ENCODE measurements at regions of chrX and their contacts with region 1.

Region 1: GRCh38 chrX:22135994-22136684 is 104.0 kb downstream of the PHEX start:
- DNase-seq: peak; percentile 36 to 73
- ATAC-seq: peak; percentile 69 to 75; a peak in 4 of 6 replicates
- H3K4me3 ChIP-seq: no peak overlapping the region
- H3K27ac ChIP-seq: peak overlapping the region; percentile 68 to 84
- H3K4me1 ChIP-seq: peaks cover 31% of the 10 kb centered on the region
- CTCF ChIP-seq: peak; percentile 77
- EP300 ChIP-seq: no peak
- POLR2A ChIP-seq: no peak
- RAD21 ChIP-seq: peak; percentile 68 to 76

Region 2: GRCh38 chrX:21985332-21985777 is 150.8 kb before region 1 on chrX:
- CTCF ChIA-PET with region 1: interaction called, 25 read pairs
- POLR2A ChIA-PET with region 1: interaction called, 3 read pairs
- DNase-seq: peak; percentile 76 to 77
- ATAC-seq: peak; percentile 93 to 95
- H3K4me3 ChIP-seq: no peak overlapping the region
- H3K27ac ChIP-seq: no peak overlapping the region
- H3K4me1 ChIP-seq: peaks cover 13% of the 10 kb centered on the region
- CTCF ChIP-seq: peak; percentile 88
- EP300 ChIP-seq: no peak
- POLR2A ChIP-seq: no peak
- RAD21 ChIP-seq: peak; percentile 82 to 83

Region 3: GRCh38 chrX:22081475-22082092 is 54.6 kb before region 1 on chrX:
- CTCF ChIA-PET with region 1: interaction called, 14 read pairs
- POLR2A ChIA-PET with region 1: no interaction called
- DNase-seq: peak in 1 of 2 experiments; percentile 63
- ATAC-seq: peak; percentile 64 to 93; a peak in 5 of 6 replicates
- H3K4me3 ChIP-seq: no peak overlapping the region
- H3K27ac ChIP-seq: no peak overlapping the region
- H3K4me1 ChIP-seq: no peaks in the 10 kb centered on the region
- CTCF ChIP-seq: peak; percentile 58
- EP300 ChIP-seq: no peak
- POLR2A ChIP-seq: no peak
- RAD21 ChIP-seq: peak; percentile 58 to 72

Region 4: DNA sequence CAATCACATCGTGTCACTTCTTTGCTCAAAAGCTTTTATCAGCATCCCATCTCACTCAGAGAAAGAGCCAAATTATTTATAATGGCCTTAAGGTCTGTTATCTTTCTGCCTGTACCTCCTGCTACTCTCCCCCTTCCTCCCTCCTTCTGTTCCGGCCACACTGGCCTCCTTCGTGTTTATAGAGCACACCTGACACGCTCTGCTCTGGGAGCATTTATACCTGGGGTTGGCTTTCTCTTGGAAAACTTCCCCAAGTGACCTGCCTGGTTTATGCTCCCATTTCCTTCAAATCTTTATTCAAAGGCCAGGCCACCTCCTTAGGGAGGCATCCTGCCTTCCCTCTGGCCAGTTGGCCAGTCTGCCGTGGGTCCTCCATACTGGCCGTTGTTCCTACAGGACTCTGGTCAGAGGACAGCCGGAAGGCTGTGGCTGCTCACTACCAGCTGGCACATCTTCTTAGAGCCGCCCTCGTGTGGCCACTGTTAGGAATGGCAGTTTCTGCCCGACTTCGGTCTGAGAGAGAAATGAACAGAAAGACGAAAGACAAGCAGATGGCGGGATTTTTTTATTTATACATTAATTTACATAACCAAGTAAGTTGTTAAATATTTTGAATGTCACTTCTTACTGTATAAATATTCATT is 56.4 kb after region 1 on chrX:
- CTCF ChIA-PET with region 1: interaction called, 17 read pairs
- POLR2A ChIA-PET with region 1: no interaction called
- DNase-seq: peak; percentile 25 to 75
- ATAC-seq: peak; percentile 95 to 98
- H3K4me3 ChIP-seq: no peak overlapping the region
- H3K27ac ChIP-seq: peak overlapping the region in 1 of 2 experiments; percentile 70; a peak in 3 of 6 replicates
- H3K4me1 ChIP-seq: no peaks in the 10 kb centered on the region
- CTCF ChIP-seq: peak; percentile 66
- EP300 ChIP-seq: no peak
- POLR2A ChIP-seq: no peak
- RAD21 ChIP-seq: peak; percentile 63 to 66

Region 5: GRCh38 chrX:22748093-22748999 is 612.2 kb after region 1 on chrX:
- CTCF ChIA-PET with region 1: interaction called, 18 read pairs
- POLR2A ChIA-PET with region 1: no interaction called
- DNase-seq: peak; percentile 6 to 38
- ATAC-seq: peak; percentile 82 to 89
- H3K4me3 ChIP-seq: no peak overlapping the region
- H3K27ac ChIP-seq: no peak overlapping the region
- H3K4me1 ChIP-seq: no peaks in the 10 kb centered on the region
- CTCF ChIP-seq: peak; percentile 57
- EP300 ChIP-seq: no peak
- POLR2A ChIP-seq: no peak
- RAD21 ChIP-seq: peak; percentile 40 to 51; a peak in 3 of 5 replicates

Measured in A549 (cell line).